ENCODE measurements at regions of chr3 and their contacts with region 1.

Region 1: DNA sequence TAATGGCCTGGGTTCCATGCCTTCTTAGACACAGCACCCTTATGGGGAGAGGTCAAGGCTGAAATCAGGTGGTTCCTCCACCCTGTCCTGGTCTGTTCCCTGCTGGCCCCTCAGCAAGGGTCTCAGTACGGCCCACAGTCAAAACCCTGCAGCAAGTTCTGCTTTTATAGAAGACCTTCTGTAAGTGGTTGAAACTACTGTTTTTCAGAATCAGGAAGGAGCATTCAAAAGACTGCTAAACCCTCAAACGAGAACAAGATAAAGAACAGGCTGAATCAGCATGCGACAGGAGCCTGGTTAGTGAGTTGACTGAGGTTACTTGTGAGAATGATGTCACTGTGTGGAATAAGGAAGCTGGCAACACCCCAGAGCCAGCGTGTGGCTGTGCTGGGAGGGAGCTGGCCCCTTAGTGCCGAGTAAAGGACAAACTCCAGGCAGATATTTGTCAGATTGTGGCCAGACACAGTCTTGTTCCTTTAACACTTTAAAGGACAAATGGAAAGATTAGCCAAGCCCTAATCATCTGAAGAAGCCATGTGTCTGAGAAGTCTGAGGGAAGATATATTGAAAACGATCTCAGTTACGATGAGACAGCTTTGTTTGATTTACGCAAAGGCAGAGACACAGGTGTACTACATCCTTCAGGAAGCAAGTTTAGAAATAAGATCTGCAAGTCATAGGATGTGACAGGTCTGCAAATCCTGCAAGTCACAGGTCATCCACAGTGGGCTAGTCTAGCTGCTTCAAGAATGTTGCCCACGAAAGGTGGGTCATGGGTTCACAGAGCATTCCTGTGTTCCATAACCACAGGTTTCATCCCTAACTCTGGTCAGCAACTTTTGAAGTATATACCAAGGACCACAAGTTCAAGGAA is 54.0 kb downstream of the B3GNT5 start:
- DNase-seq: peak in 21 of 35 experiments; percentile 3 to 57 (median 19)
- ATAC-seq: peak in 2 of 4 experiments; percentile 55 to 77
- H3K4me3 ChIP-seq: no peak overlapping the region
- H3K4me3 Mint-ChIP-seq: no peak overlapping the region
- H3K27ac ChIP-seq: no peak overlapping the region
- H3K27ac Mint-ChIP-seq: no peak overlapping the region
- H3K4me1 ChIP-seq: peaks cover 0 to 2% of the 10 kb centered on the region in 2 experiments
- H3K4me1 Mint-ChIP-seq: peaks cover 4 to 10% (median 8%) of the 10 kb centered on the region in 3 donors
- H3K27me3 ChIP-seq: no peaks in the 10 kb centered on the region
- H3K27me3 Mint-ChIP-seq: no peaks in the 10 kb centered on the region

Region 2: DNA sequence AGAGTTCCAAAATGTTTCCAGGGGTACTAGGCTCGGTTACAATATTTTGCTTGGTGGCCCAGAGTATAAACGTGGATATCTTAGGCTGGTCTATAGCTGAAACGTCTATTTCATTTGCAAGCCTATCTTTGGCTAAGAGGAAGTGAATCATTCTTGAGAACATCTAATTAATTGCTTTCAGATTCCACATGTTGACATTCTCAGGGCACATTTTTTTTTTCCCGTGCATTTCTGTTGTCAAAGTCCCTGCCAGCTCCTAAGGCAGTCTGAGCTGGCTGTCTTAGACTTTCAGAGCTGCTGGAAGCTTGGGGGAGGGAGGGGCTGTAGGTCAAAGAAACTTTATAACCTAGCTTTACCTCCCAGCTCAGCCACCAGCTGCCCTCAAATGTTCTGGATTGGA is 121.3 kb before region 1 on chr3:
- CTCF ChIA-PET with region 1: interaction called in 1 of 2 experiments, 3 read pairs
- POLR2A ChIA-PET with region 1: interaction called in 1 of 2 experiments, 12 read pairs
- DNase-seq: no peak
- ATAC-seq: no peak
- H3K4me3 ChIP-seq: no peak overlapping the region
- H3K4me3 Mint-ChIP-seq: no peak overlapping the region
- H3K27ac ChIP-seq: no peak overlapping the region
- H3K27ac Mint-ChIP-seq: no peak overlapping the region
- H3K4me1 ChIP-seq: no peaks in the 10 kb centered on the region
- H3K4me1 Mint-ChIP-seq: no peaks in the 10 kb centered on the region
- H3K27me3 ChIP-seq: peaks cover 0 to 8% of the 10 kb centered on the region in 2 experiments
- H3K27me3 Mint-ChIP-seq: peaks cover 0 to 3% of the 10 kb centered on the region in 2 donors

Region 3: DNA sequence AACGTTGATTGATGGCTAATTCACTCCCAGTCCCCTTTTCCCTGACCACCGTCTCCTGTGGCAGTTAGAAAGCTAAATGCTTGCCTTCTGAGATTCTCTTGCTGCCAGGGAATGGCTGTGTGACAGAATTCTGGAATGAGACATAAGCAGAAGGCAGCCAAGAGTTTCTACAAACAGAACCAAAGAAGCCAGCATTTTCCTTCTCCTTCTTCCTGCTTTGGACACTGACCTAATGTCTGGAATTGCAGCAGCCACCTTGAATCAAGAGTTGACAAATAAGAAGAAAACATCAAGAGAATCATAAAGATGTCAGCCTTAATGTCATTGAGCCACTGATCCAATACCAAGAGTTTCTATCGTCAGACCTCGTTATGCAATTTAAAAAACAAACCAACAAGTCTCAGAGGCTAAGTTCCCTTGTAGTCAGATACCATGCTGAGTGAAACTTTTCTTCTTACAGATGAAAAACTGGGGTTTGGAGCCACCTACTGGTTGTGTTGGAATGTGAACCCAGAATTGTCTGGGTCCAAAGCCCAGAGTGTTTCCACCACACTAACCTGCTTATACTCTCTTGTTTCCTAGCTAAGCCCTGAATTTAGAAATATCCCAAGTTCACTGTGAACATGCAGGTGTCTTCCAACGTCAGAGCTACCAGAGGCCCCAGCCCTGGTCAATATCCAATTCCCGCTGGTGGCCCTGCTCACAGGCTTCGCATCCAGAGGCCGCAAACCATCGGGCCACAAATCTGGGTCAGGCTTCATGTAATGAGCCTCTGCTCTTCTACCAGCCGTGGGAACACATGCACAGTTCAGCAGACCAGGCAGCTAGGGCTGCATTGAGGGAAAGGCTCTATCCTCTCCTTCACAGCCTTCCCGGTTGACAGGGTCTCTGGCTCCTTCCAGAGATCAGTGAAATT is 78.9 kb after region 1 on chr3:
- CTCF ChIA-PET with region 1: no interaction called
- POLR2A ChIA-PET with region 1: no interaction called
- DNase-seq: peak in 33 of 35 experiments; percentile 14 to 80 (median 43)
- ATAC-seq: peak; percentile 69 to 78 (median 76)
- H3K4me3 ChIP-seq: no peak overlapping the region
- H3K4me3 Mint-ChIP-seq: no peak overlapping the region
- H3K27ac ChIP-seq: no peak overlapping the region
- H3K27ac Mint-ChIP-seq: no peak overlapping the region
- H3K4me1 ChIP-seq: no peaks in the 10 kb centered on the region
- H3K4me1 Mint-ChIP-seq: peaks cover 0 to 2% (median 2%) of the 10 kb centered on the region in 3 donors
- H3K27me3 ChIP-seq: no peaks in the 10 kb centered on the region
- H3K27me3 Mint-ChIP-seq: peaks cover 0 to 2% of the 10 kb centered on the region in 2 donors

Region 4: DNA sequence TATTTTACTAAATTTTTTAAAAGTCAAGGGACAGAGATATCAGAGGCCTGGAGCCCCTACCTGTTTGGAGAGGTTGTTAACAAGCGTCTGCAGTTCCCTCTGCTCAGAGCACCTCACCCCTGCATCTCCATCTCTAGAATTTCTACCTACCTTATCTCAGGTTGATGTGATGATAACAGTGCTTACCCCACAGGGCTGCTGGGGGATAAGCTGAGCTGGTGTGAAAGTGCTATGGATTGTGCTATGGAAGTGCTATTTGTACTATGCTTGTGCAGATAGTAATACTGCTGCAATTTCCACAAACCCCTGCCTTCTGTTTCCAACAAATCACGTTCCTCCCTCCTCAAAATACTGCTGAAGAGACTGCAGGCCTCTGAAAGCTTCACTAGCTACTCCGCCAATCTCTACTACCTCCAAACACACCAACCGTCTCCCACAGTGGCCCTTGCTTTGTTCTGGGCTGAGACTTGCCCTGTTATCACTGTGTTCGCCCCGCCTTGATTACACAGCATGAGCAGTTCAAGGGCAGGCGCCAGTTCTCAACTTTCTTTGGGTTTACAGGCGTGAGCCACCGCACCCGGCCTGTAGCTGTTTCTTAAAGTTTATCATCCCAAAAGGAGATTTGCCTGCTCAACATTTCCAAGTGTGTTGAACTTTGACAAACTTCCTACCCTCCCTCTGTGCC is 606.0 kb after region 1 on chr3:
- CTCF ChIA-PET with region 1: no interaction called
- POLR2A ChIA-PET with region 1: no interaction called
- DNase-seq: no peak
- ATAC-seq: no peak
- H3K4me3 ChIP-seq: no peak overlapping the region
- H3K4me3 Mint-ChIP-seq: no peak overlapping the region
- H3K27ac ChIP-seq: no peak overlapping the region
- H3K27ac Mint-ChIP-seq: no peak overlapping the region
- H3K4me1 ChIP-seq: no peaks in the 10 kb centered on the region
- H3K4me1 Mint-ChIP-seq: no peaks in the 10 kb centered on the region
- H3K27me3 ChIP-seq: peaks cover 0 to 6% of the 10 kb centered on the region in 2 experiments
- H3K27me3 Mint-ChIP-seq: no peaks in the 10 kb centered on the region

Region 5: DNA sequence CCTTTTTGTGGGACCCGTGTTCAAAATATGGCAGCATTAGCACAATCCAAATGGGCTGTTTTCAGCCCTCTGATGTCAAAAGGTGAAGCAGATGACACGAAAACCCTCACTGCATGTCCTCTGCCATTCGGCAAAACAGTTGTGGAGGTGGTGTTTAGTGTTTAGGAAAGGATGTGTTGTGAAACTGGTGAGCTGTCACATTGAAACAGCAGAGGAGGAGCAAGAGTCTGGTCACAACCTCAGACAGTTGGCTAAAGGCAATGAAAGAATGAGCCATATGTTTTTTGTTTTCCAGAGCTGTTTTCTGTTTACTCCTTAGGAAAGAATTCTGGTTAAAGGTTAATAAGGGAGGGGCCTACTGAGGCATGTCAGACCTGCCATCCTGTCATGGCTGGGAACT is 1645.6 kb after region 1 on chr3:
- CTCF ChIA-PET with region 1: no interaction called
- POLR2A ChIA-PET with region 1: no interaction called
- DNase-seq: no peak
- ATAC-seq: no peak
- H3K4me3 ChIP-seq: no peak overlapping the region
- H3K4me3 Mint-ChIP-seq: no peak overlapping the region
- H3K27ac ChIP-seq: no peak overlapping the region
- H3K27ac Mint-ChIP-seq: peak overlapping the region in 1 of 2 donors; percentile 44
- H3K4me1 ChIP-seq: no peaks in the 10 kb centered on the region
- H3K4me1 Mint-ChIP-seq: peaks cover 0 to 8% (median 0%) of the 10 kb centered on the region in 3 donors
- H3K27me3 ChIP-seq: no peaks in the 10 kb centered on the region
- H3K27me3 Mint-ChIP-seq: no peaks in the 10 kb centered on the region